CD8-positive, alpha-beta T cell (primary cell): ENCODE measurements at regions of chr1 and their contacts with region 1.

Region 1: DNA sequence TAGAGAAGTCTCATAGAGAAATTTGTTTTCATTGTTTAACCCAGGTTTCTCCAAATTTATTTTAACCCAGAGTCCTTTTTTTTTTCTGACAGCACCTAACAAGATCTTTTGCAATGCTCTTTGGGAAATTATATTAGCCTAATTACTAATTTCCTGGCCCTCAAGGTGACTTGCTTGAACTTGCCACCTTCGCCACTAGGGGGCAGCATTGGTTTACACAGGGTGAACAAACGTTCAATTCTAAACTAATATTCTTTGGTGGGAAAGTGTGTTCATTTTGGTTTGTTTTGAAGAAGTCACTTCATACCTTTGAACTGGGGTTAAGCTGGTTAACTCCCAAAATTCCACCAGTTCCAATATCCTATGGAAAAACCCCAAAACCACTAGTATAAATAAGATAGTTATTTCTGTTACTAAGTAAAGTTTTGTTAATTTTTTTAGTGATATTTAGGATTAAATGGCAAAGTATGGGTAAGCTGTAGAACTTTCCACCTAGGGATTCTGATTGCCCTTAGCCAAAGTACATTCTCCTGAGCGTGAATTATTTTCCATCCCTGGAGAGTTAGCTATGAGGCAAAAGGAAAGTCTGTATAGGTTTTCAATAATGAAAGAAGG is 13.0 kb downstream of the CCDC190 start:
- DNase-seq: peak; percentile 57 to 85 (median 76)
- ATAC-seq: peak; percentile 51
- H3K4me3 ChIP-seq: no peak overlapping the region
- H3K4me3 Mint-ChIP-seq: no peak overlapping the region
- H3K27ac ChIP-seq: no peak overlapping the region
- H3K27ac Mint-ChIP-seq: no peak overlapping the region
- H3K4me1 ChIP-seq: no peaks in the 10 kb centered on the region
- H3K4me1 Mint-ChIP-seq: no peaks in the 10 kb centered on the region
- H3K27me3 ChIP-seq: no peaks in the 10 kb centered on the region
- H3K27me3 Mint-ChIP-seq: peaks cover 5% of the 10 kb centered on the region
- CTCF ChIP-seq: peak; percentile 96

Region 2: DNA sequence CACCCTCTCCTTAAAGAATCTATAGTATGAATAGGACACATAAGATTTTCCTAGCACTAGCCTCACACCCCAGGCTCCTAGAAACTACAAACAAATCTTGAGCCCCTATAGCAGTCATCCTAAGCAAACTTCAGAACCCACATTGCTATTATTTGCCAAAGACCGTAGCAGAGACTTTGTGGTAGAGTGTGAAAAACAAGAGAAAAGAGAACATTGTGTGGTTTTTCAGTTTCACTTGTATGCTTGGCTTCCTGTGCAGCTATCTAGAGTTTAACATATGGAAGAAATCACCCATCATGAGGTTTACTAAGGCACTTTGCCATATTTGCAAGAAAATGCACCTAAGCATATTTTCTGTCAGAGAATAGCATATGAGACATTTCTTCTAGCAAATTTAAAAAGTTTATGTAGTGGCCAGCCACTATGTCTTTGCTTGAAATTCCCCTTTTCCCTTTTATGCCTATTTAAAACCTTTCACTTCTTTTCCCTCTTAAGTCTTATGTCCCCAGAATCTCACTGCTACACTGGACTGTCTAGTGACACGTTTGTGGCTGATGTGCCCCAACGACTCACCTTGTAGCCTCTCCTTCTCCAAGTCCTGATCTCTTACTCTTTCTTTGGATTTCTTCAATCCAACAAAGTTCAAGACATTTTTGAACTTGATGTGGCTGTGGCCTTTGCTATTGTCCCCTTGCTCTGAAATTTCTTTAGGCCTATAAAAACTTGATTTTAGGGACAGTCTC is 12.6 kb before region 1 on chr1:
- CTCF ChIA-PET with region 1: interaction called, 11 read pairs
- POLR2A ChIA-PET with region 1: no interaction called
- intact Hi-C with region 1: no loop called
- DNase-seq: no peak
- ATAC-seq: no peak
- H3K4me3 ChIP-seq: no peak overlapping the region
- H3K4me3 Mint-ChIP-seq: no peak overlapping the region
- H3K27ac ChIP-seq: no peak overlapping the region
- H3K27ac Mint-ChIP-seq: no peak overlapping the region
- H3K4me1 ChIP-seq: no peaks in the 10 kb centered on the region
- H3K4me1 Mint-ChIP-seq: peaks cover 4% of the 10 kb centered on the region
- H3K27me3 ChIP-seq: no peaks in the 10 kb centered on the region
- H3K27me3 Mint-ChIP-seq: peaks cover 16% of the 10 kb centered on the region
- CTCF ChIP-seq: no peak

Region 3: GRCh38 chr1:162861101-162861500 is 13.2 kb after region 1 on chr1 and contains the start of gene CCDC190:
- CTCF ChIA-PET with region 1: interaction called, 16 read pairs
- POLR2A ChIA-PET with region 1: no interaction called
- intact Hi-C with region 1: no loop called
- DNase-seq: no peak
- ATAC-seq: no peak
- H3K4me3 ChIP-seq: no peak within 1 kb of the TSS
- H3K4me3 Mint-ChIP-seq: no peak within 1 kb of the TSS
- H3K27ac ChIP-seq: no peak within 1 kb of the TSS
- H3K27ac Mint-ChIP-seq: no peak within 1 kb of the TSS
- H3K4me1 ChIP-seq: no peaks in the 10 kb centered on the region
- H3K4me1 Mint-ChIP-seq: no peaks in the 10 kb centered on the region
- H3K27me3 ChIP-seq: peaks cover 0 to 6% of the 10 kb centered on the region in 2 experiments
- H3K27me3 Mint-ChIP-seq: peaks cover 12% of the 10 kb centered on the region
- CTCF ChIP-seq: no peak
- total RNA-seq, gene CCDC190: not detected

Region 4: DNA sequence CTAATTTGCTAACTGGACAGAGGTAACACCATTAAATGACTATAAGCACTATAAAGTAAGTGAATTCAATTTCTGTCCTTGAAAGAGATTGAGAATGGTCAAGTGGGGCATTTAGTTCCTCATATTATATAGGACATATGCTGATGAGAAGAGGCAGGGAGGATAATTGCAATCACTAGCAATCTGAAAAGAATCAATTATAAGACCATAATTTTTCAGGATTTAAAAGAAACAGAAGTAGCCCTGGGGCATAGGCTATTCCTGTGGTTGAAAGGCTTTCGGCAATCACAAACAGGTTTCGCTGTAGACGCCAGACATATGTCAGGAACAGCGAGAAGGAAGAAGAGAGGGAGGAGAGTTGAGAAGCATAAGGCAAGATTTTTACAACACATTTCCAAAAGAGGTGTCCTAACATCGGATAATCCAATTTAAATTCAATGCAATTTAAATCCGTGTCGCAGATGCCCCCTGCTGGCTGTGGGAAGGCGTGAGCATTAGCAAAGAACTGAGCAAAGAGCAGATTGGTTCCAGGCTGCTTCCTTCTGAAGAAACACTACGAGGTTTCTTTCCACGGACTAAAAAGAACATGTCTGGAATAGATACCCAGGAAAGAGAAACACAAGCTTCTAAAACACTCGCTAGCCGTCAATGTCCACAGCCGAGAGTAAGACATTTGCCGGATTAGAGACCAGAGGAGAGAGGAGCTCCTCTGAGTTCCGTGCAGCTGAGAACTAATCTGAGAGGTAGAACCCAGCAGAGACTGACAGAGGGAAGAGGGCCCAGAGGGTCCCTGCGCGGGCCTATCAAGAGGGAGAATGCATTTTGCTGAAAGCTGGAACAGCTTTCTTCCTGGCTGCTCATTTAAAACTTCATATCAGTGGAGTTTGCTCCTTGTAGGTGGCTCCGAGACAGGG is 326.8 kb after region 1 on chr1:
- CTCF ChIA-PET with region 1: interaction called, 4 read pairs
- POLR2A ChIA-PET with region 1: no interaction called
- intact Hi-C with region 1: loop called in 1 of 2 experiments (anchors 2 kb)
- DNase-seq: peak in 6 of 9 experiments; percentile 1 to 24 (median 22)
- ATAC-seq: no peak
- H3K4me3 ChIP-seq: no peak overlapping the region
- H3K4me3 Mint-ChIP-seq: no peak overlapping the region
- H3K27ac ChIP-seq: no peak overlapping the region
- H3K27ac Mint-ChIP-seq: no peak overlapping the region
- H3K4me1 ChIP-seq: no peaks in the 10 kb centered on the region
- H3K4me1 Mint-ChIP-seq: no peaks in the 10 kb centered on the region
- H3K27me3 ChIP-seq: peaks cover 0 to 2% of the 10 kb centered on the region in 2 experiments
- H3K27me3 Mint-ChIP-seq: peaks cover 7% of the 10 kb centered on the region
- CTCF ChIP-seq: peak; percentile 14

Region 5: GRCh38 chr1:163315773-163316374 is 467.9 kb after region 1 on chr1:
- CTCF ChIA-PET with region 1: interaction called, 42 read pairs
- POLR2A ChIA-PET with region 1: no interaction called
- intact Hi-C with region 1: loop called in 1 of 2 experiments (anchors 1 kb)
- DNase-seq: peak in 6 of 9 experiments; percentile 22 to 66 (median 50)
- ATAC-seq: peak; percentile 23
- H3K4me3 ChIP-seq: no peak overlapping the region
- H3K4me3 Mint-ChIP-seq: no peak overlapping the region
- H3K27ac ChIP-seq: no peak overlapping the region
- H3K27ac Mint-ChIP-seq: no peak overlapping the region
- H3K4me1 ChIP-seq: peaks cover 2% of the 10 kb centered on the region
- H3K4me1 Mint-ChIP-seq: peaks cover 3% of the 10 kb centered on the region
- H3K27me3 ChIP-seq: no peaks in the 10 kb centered on the region
- H3K27me3 Mint-ChIP-seq: no peaks in the 10 kb centered on the region
- CTCF ChIP-seq: peak; percentile 73

Region 6: GRCh38 chr1:164786980-164787833 is 1939.3 kb after region 1 on chr1:
- CTCF ChIA-PET with region 1: no interaction called
- POLR2A ChIA-PET with region 1: no interaction called
- intact Hi-C with region 1: loop called in 1 of 2 experiments (anchors 5 kb)
- DNase-seq: peak; percentile 6 to 71 (median 52)
- ATAC-seq: no peak
- H3K4me3 ChIP-seq: no peak overlapping the region
- H3K4me3 Mint-ChIP-seq: no peak overlapping the region
- H3K27ac ChIP-seq: no peak overlapping the region
- H3K27ac Mint-ChIP-seq: no peak overlapping the region
- H3K4me1 ChIP-seq: no peaks in the 10 kb centered on the region
- H3K4me1 Mint-ChIP-seq: peaks cover 6% of the 10 kb centered on the region
- H3K27me3 ChIP-seq: no peaks in the 10 kb centered on the region
- H3K27me3 Mint-ChIP-seq: peaks cover 6% of the 10 kb centered on the region
- CTCF ChIP-seq: peak; percentile 37